MCF 10A (cell line): ENCODE measurements at regions of chr7 and their contacts with region 1.

Region 1: GRCh38 chr7:4641667-4642467 is 40.2 kb upstream of the FOXK1 start:
- DNase-seq: peak; percentile 90
- H3K4me3 Mint-ChIP-seq: peak overlapping the region; percentile 89
- H3K27ac Mint-ChIP-seq: peak overlapping the region; percentile 93
- H3K4me1 Mint-ChIP-seq: peaks cover 5% of the 10 kb centered on the region
- H3K27me3 Mint-ChIP-seq: no peaks in the 10 kb centered on the region
- CTCF ChIP-seq: peak; percentile 33

Region 2: DNA sequence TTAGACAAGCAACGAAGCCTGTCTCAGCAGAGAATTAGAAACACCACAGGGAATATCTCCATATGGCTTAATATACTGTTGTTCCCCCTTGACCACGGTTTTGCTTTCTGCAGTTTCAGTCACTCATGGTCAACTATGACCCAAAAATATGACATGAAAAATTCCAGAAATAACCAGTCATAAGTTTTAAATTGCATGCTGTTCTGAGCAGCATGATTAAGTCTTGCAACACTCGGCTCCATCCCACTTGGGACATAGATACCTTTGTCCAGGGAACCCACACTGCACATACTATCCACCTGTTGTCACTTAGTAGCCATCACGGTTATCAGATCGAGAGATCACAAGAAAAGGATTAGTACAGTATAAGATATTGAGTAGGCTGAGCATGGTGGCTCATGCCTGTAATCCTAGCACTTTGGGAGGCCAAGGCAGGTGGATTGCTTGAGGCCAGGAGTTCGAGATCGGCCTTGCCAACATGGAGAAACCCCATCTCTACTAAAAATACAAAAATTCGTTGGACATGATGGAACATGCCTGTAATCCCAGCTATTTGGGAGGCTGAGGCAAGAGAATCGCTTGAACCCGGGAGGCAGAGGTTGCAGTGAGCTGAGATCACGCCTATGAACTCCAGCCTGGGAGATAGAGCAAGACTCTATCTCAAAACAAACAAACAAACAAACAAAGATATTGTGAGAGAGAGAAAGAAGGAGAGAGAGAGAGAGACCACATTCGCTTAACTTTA is 20.3 kb before region 1 on chr7:
- CTCF ChIA-PET with region 1: no interaction called
- POLR2A ChIA-PET with region 1: no interaction called
- intact Hi-C with region 1: no loop called
- DNase-seq: no peak
- H3K4me3 Mint-ChIP-seq: no peak overlapping the region
- H3K27ac Mint-ChIP-seq: no peak overlapping the region
- H3K4me1 Mint-ChIP-seq: no peaks in the 10 kb centered on the region
- H3K27me3 Mint-ChIP-seq: no peaks in the 10 kb centered on the region
- CTCF ChIP-seq: no peak

Region 3: DNA sequence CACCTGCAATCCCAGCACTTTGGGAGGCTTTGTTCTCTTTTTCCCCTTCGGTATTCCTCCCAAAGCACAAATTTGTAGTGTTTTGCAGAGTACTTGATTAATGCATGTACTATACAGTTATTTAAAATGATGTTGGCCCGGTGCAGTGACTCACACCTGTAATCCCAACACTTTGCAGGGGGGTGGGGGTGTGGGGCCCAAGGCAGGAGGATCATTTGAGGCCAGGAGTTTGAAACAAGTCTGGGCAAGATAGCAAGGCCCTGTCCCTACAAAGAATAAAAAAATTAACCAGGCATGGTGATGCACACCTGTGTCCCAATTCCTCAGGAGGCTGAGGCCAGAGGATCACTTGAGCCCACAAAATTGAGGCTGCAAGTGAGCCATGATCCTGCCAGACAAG is 13.4 kb after region 1 on chr7:
- CTCF ChIA-PET with region 1: interaction called, 3 read pairs
- POLR2A ChIA-PET with region 1: interaction called, 10 read pairs
- intact Hi-C with region 1: no loop called
- DNase-seq: peak; percentile 77
- H3K4me3 Mint-ChIP-seq: no peak overlapping the region
- H3K27ac Mint-ChIP-seq: no peak overlapping the region
- H3K4me1 Mint-ChIP-seq: peaks cover 5% of the 10 kb centered on the region
- H3K27me3 Mint-ChIP-seq: no peaks in the 10 kb centered on the region
- CTCF ChIP-seq: no peak

Region 4: DNA sequence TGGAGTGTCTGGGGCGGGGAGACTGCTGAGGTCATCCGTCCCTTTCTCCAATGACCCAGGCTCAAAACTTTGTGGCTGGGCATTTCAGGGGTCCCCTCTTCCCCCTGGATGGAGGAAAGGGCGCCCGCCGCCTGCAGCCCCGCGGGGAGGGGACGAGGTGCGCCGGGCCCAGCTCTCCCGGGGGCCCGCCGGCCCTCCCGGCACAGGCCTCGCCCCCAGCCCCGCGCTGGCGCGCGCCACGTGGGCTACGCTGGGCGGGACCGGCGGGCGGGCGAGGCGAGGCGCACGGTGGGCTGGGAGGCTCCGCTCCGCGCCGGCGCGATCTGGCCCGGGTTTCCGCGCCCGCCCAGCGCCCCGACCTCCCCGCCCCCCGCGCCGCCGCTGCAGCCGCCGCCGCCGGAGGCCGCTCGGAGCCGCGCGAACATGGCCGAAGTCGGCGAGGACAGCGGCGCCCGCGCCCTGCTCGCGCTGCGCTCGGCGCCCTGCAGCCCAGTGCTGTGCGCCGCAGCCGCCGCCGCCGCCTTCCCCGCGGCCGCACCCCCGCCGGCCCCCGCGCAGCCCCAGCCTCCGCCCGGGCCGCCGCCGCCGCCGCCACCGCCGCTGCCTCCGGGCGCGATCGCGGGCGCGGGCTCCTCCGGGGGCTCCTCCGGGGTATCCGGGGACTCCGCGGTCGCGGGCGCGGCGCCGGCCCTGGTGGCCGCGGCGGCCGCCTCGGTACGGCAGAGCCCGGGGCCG is 40.2 kb after region 1 on chr7 and contains the start of gene FOXK1:
- CTCF ChIA-PET with region 1: interaction called, 4 read pairs
- POLR2A ChIA-PET with region 1: interaction called, 100 read pairs
- intact Hi-C with region 1: loop called (anchors 1 kb)
- DNase-seq: peak; percentile 64
- H3K4me3 Mint-ChIP-seq: peak within 1 kb of the TSS; percentile 83
- H3K27ac Mint-ChIP-seq: peak within 1 kb of the TSS; percentile 96
- H3K4me1 Mint-ChIP-seq: peaks cover 19% of the 10 kb centered on the region
- H3K27me3 Mint-ChIP-seq: no peaks in the 10 kb centered on the region
- CTCF ChIP-seq: no peak
- total RNA-seq, gene FOXK1: 37.7 and 43.8 TPM in 2 replicates

Region 5: GRCh38 chr7:4715410-4715776 is 73.5 kb after region 1 on chr7:
- CTCF ChIA-PET with region 1: interaction called, 5 read pairs
- POLR2A ChIA-PET with region 1: interaction called, 13 read pairs
- intact Hi-C with region 1: no loop called
- DNase-seq: peak; percentile 96
- H3K4me3 Mint-ChIP-seq: peak overlapping the region; percentile 56
- H3K27ac Mint-ChIP-seq: peak overlapping the region; percentile 20
- H3K4me1 Mint-ChIP-seq: peaks cover 20% of the 10 kb centered on the region
- H3K27me3 Mint-ChIP-seq: no peaks in the 10 kb centered on the region
- CTCF ChIP-seq: no peak

Region 6: GRCh38 chr7:4725014-4725849 is 83.4 kb after region 1 on chr7:
- CTCF ChIA-PET with region 1: no interaction called
- POLR2A ChIA-PET with region 1: interaction called, 10 read pairs
- intact Hi-C with region 1: no loop called
- DNase-seq: peak; percentile 84
- H3K4me3 Mint-ChIP-seq: peak overlapping the region; percentile 87
- H3K27ac Mint-ChIP-seq: peak overlapping the region; percentile 95
- H3K4me1 Mint-ChIP-seq: peaks cover 21% of the 10 kb centered on the region
- H3K27me3 Mint-ChIP-seq: no peaks in the 10 kb centered on the region
- CTCF ChIP-seq: no peak

Region 7: DNA sequence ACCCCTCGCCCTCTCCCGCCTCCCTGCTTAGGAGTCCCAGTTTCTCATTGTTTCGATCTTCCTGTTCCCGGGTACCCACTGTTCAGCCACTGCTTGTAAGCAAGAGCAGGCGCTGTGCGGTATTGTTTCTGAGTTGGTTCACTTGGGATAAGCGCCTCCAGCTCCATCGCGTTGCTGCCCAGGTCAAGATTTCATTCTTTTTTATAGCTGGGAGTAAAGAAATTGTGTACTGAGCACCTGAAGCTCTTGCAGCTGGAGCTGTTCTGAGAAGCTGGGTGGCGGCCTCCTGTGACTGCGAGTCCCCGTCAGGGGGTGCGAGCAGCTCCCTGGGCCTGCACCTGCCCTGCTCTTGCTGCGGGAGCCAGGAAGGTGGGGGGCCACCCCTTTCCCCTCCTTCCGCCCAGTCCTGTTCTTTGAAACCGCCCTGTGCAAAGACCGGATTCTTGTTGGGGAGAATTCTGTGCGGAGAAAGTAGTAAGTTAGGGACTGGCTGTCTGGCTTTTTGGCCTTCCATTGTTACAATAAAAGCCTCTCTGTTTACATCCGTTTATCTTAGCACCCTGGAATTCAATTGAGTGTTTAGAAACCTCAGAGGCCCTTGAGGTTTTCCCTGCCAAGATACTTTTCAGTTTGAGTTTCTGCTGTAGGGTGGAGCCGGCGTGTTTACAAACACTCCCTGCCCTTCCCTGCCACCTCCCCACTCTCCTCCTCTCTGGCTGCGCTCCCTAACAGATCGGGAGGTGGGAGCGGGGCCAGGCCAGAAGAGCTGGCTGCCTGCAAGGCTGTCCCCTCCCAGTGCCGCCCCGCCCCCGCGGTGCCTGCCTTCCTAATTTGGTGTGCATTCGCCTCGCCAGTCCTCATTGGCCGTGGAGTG is 102.8 kb after region 1 on chr7:
- CTCF ChIA-PET with region 1: interaction called, 5 read pairs
- POLR2A ChIA-PET with region 1: interaction called, 45 read pairs
- intact Hi-C with region 1: loop called (anchors 1 kb)
- DNase-seq: peak; percentile 99
- H3K4me3 Mint-ChIP-seq: peak overlapping the region; percentile 73
- H3K27ac Mint-ChIP-seq: peak overlapping the region; percentile 97
- H3K4me1 Mint-ChIP-seq: peaks cover 4% of the 10 kb centered on the region
- H3K27me3 Mint-ChIP-seq: no peaks in the 10 kb centered on the region
- CTCF ChIP-seq: no peak

Region 8: GRCh38 chr7:4775250-4775847 is 133.5 kb after region 1 on chr7 and contains the start of gene AP5Z1:
- CTCF ChIA-PET with region 1: no interaction called
- POLR2A ChIA-PET with region 1: interaction called, 39 read pairs
- intact Hi-C with region 1: no loop called
- DNase-seq: peak; percentile 93
- H3K4me3 Mint-ChIP-seq: peak within 1 kb of the TSS; percentile 99
- H3K27ac Mint-ChIP-seq: peak within 1 kb of the TSS; percentile 98
- H3K4me1 Mint-ChIP-seq: peaks cover 15% of the 10 kb centered on the region
- H3K27me3 Mint-ChIP-seq: no peaks in the 10 kb centered on the region
- CTCF ChIP-seq: no peak
- total RNA-seq, gene AP5Z1: 26.5 and 35.0 TPM in 2 replicates